OCI-LY7 (cell line): ENCODE measurements at regions of chr9 and their contacts with region 1.

Region 1: GRCh38 chr9:22528485-22528884 is 81.9 kb downstream of the DMRTA1 start:
- DNase-seq: peak; percentile 77
- H3K4me3 ChIP-seq: peak overlapping the region; percentile 31
- H3K27ac ChIP-seq: peak overlapping the region; percentile 6
- H3K4me1 ChIP-seq: peaks cover 51% of the 10 kb centered on the region
- CTCF ChIP-seq: peak; percentile 94

Region 2: DNA sequence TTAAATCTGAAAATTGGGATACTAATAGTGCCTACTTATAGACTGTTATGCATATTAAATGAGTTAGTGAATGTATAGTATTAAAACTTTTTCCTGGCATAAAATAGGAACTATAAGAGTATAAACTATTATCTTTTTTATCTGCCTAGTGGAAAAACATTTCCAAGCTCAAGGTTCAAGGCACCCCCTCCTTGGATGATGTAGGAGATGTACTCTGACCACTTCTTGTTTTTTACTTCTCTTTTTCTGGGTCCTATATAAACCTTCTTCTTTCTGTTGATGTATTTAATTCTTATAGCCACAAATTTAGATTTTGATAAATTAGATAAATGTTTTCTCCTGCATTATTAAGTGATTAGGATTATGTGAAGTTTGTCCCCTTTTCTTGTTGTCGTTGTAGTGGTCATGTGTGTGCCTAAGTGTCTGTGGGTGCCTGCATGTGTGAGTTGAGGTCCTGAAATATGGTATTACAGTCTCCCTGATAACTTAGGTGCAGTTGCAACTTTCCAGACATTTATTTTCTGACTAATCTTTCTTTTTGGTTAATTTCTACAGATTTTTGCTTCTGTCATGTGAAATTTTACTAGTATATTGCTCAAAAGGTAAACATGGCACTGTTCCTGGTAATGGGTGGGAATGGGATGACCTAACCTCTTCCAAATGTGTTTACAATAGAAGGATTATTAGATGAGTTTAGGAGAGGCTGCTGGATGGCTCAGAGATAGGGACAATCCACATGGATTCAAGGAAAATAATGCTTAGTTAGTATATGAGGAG is 358.6 kb before region 1 on chr9:
- CTCF ChIA-PET with region 1: no interaction called
- POLR2A ChIA-PET with region 1: no interaction called
- intact Hi-C with region 1: loop called (anchors 10 kb)
- DNase-seq: peak; percentile 19
- H3K4me3 ChIP-seq: no peak overlapping the region
- H3K27ac ChIP-seq: peak overlapping the region; percentile 61
- H3K4me1 ChIP-seq: peaks cover 44% of the 10 kb centered on the region
- CTCF ChIP-seq: no peak

Region 3: GRCh38 chr9:22512495-22512894 is 16.0 kb before region 1 on chr9:
- CTCF ChIA-PET with region 1: interaction called, 4 read pairs
- POLR2A ChIA-PET with region 1: interaction called, 28 read pairs
- intact Hi-C with region 1: no loop called
- DNase-seq: peak; percentile 95
- H3K4me3 ChIP-seq: peak overlapping the region; percentile 19
- H3K27ac ChIP-seq: peak overlapping the region; percentile 94
- H3K4me1 ChIP-seq: peaks cover 66% of the 10 kb centered on the region
- CTCF ChIP-seq: no peak

Region 4: DNA sequence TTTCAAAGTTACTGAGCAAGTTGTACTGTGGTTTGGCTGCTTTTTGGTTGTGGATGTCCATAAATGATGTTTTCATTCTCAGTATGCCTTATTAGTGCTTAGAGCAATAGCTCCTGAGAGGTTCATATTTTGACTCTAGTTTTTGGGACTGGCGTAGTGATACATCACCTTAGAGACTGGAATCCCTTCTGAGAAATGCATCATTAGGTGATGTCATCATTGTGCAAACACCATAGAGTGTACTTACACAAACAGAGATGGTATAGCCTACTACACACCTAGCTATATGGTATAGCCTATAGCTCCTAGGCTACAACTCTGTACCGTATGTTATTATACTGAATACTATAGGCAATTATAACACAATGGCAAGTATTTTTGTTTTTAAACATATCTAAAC is 11.4 kb after region 1 on chr9:
- CTCF ChIA-PET with region 1: no interaction called
- POLR2A ChIA-PET with region 1: interaction called, 10 read pairs
- intact Hi-C with region 1: no loop called
- DNase-seq: no peak
- H3K4me3 ChIP-seq: no peak overlapping the region
- H3K27ac ChIP-seq: no peak overlapping the region
- H3K4me1 ChIP-seq: no peaks in the 10 kb centered on the region
- CTCF ChIP-seq: no peak

Region 5: DNA sequence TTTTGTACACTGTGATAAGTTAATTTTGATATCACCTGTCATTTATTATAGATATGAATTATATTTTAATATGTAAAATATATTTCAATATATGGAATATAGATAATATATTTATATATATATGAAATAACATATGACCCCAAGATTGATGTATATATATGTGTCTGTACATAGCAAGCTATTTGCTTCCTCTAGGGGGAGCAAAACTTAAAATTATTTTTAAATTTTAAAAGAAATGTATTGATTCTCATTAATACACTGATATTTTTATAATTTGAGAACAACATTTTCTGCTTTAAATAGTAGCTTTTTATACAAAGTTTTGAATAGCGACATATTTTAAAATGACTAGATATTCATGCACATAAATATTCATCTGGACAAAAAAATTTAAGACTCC is 190.2 kb after region 1 on chr9:
- CTCF ChIA-PET with region 1: interaction called, 3 read pairs
- POLR2A ChIA-PET with region 1: no interaction called
- intact Hi-C with region 1: loop called (anchors 5 kb)
- DNase-seq: no peak
- H3K4me3 ChIP-seq: no peak overlapping the region
- H3K27ac ChIP-seq: no peak overlapping the region
- H3K4me1 ChIP-seq: no peaks in the 10 kb centered on the region
- CTCF ChIP-seq: peak; percentile 74

Region 6: DNA sequence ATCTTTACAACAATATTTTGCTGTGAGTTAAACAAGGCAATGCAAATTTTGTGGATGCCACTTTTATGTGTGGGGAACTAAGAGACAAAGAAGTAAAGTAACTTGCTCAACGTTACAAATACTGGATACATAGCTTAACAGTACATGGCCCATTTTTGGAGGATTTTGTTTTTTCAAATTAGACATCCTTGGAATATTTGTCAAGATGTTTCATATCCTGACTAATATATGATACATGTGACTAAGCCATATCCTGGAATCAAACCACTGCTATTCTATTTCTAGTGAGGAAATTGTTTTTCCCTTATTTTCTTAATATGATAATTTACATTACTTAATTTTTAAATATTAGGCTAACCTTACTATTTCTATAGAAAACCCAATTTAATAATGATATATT is 448.0 kb after region 1 on chr9:
- CTCF ChIA-PET with region 1: no interaction called
- POLR2A ChIA-PET with region 1: no interaction called
- intact Hi-C with region 1: no loop called
- DNase-seq: no peak
- H3K4me3 ChIP-seq: no peak overlapping the region
- H3K27ac ChIP-seq: no peak overlapping the region
- H3K4me1 ChIP-seq: no peaks in the 10 kb centered on the region
- CTCF ChIP-seq: no peak

Region 7: GRCh38 chr9:24245988-24246387 is 1717.5 kb after region 1 on chr9:
- CTCF ChIA-PET with region 1: no interaction called
- POLR2A ChIA-PET with region 1: no interaction called
- intact Hi-C with region 1: loop called (anchors 10 kb)
- DNase-seq: peak; percentile 32
- H3K4me3 ChIP-seq: no peak overlapping the region
- H3K27ac ChIP-seq: no peak overlapping the region
- H3K4me1 ChIP-seq: no peaks in the 10 kb centered on the region
- CTCF ChIP-seq: peak; percentile 80